ENCODE measurements at regions of chr6 and their contacts with region 1.

Region 1: GRCh38 chr6:99425647-99426453 is 742 bp upstream of the PNISR start:
- DNase-seq: peak; percentile 82
- ATAC-seq: peak; percentile 60
- H3K4me3 Mint-ChIP-seq: peak overlapping the region; percentile 91
- H3K27ac Mint-ChIP-seq: peak overlapping the region; percentile 99
- H3K4me1 Mint-ChIP-seq: peaks cover 57% of the 10 kb centered on the region
- H3K27me3 Mint-ChIP-seq: no peaks in the 10 kb centered on the region

Region 2: DNA sequence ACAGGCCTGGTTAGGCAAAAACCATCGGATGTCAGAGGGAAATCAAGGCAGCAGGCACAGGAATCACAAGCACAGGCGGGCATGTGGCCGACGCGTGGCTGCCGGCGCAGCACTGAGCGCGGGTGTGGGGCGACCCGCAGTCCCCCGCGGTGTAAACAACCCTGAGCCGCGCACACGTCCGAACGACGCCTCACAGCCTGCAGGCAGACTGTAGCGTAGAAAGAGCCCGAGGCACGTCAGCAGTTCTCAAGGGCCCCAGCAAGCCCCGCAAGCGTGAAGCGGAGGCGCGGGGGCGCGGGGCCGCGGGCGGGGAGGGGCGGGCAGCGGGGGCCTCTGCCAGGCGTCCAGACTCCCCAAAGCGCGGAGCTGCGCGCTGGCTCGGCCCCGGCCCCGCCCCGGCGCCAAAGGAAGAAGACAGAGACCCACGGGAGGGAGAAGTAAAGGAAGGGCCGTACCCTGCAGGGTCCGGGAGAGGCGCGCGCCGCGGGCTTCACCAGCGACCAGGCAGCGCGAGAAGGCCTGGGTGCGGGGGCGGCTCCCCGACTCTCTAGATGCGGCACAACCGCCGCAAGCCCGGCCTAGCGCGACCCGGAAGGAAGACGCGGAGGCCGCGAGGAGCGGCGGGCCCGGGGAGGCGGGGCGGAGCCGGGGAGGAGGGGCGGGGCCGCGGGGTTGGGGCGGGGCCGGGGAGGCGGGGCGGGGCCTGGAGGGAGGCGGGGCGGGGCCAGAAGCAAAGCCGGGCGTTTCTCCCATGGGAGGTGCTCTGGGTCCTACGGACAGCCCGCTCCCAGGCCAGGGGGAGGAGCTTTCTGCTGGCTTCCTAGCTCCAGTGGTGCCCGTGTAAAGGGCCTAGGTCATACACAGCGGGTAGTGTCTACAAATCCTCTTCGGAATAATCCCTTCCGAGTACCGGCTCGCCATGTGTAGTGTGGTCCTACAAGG is 478.2 kb before region 1 on chr6 and contains the start of gene FBXL4:
- CTCF ChIA-PET with region 1: no interaction called
- POLR2A ChIA-PET with region 1: no interaction called
- intact Hi-C with region 1: loop called in 1 of 2 experiments (anchors 2 kb)
- DNase-seq: peak; percentile 92
- ATAC-seq: peak; percentile 87
- H3K4me3 Mint-ChIP-seq: peak within 1 kb of the TSS; percentile 93
- H3K27ac Mint-ChIP-seq: peak within 1 kb of the TSS; percentile 97
- H3K4me1 Mint-ChIP-seq: peaks cover 30% of the 10 kb centered on the region
- H3K27me3 Mint-ChIP-seq: no peaks in the 10 kb centered on the region
- total RNA-seq, gene FBXL4: 16.2 to 16.5 TPM

Region 3: DNA sequence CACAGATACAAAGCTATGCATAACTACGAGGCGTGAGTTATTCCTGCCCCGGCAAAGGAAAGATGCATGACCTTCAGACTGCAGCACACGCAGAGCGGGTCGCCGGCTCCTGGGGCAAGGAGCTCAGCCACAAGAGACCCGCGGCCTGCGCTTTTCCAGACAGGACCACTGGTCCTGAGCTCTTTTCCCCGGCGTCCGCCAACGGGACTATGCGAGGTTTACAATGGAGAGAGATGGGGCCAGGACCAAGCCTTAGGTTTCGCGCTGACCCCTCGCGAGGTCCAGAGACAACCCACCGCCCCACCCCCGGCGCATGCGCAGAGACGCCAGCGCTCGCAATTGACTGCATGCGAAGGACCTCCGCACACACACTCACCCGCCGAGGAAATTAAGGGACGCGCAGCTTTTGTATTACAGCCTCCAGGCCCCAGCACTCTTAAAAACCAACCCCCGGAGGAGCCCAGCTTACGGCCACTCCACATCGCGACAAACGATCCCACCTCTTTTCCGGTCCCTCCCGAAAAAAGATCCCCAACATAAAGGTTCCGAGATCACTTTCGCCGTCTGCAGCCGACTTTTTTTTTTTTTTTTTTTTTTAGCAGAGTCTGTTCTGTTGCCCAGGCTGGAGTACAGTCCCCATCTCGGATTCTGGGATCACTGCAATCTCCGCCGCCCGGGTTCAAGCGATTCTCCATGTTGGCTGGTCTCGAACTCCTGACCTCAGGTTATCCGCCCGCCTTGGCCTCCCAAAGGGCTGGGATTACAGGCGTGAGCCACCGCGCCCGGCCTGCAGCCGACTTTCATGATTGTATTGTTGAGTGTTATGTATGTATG is 31.9 kb before region 1 on chr6 and contains the start of gene COQ3:
- CTCF ChIA-PET with region 1: interaction called, 8 read pairs
- POLR2A ChIA-PET with region 1: interaction called, 4 read pairs
- intact Hi-C with region 1: loop called (anchors 1 kb)
- DNase-seq: peak; percentile 80
- ATAC-seq: peak; percentile 87
- H3K4me3 Mint-ChIP-seq: peak within 1 kb of the TSS; percentile 94
- H3K27ac Mint-ChIP-seq: peak within 1 kb of the TSS; percentile 84
- H3K4me1 Mint-ChIP-seq: peaks cover 14% of the 10 kb centered on the region
- H3K27me3 Mint-ChIP-seq: no peaks in the 10 kb centered on the region
- total RNA-seq, gene COQ3: 13.5 to 23.4 TPM

Region 4: DNA sequence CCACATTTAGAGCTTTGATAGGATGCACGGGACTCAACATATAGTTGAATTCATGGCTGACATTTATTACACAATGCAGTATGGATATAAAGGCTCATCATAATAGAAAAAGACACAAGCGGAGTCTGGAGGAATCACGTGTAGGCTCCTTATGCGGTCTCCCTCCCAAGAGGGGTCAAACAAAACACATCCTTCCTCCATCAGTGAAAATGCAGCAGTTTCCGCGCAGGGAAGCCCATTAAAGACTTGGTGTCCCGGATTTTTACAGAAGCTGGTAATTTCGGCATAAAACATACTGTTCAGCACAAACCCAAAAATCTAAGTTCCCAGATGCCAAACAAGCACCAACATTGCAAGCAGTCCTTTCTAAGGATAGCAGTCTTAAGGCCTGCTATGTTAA is 88.2 kb after region 1 on chr6:
- CTCF ChIA-PET with region 1: interaction called, 3 read pairs
- POLR2A ChIA-PET with region 1: no interaction called
- intact Hi-C with region 1: loop called (anchors 1 kb)
- DNase-seq: no peak
- ATAC-seq: no peak
- H3K4me3 Mint-ChIP-seq: peak overlapping the region; percentile 88
- H3K27ac Mint-ChIP-seq: no peak overlapping the region
- H3K4me1 Mint-ChIP-seq: peaks cover 29% of the 10 kb centered on the region
- H3K27me3 Mint-ChIP-seq: no peaks in the 10 kb centered on the region

Region 5: DNA sequence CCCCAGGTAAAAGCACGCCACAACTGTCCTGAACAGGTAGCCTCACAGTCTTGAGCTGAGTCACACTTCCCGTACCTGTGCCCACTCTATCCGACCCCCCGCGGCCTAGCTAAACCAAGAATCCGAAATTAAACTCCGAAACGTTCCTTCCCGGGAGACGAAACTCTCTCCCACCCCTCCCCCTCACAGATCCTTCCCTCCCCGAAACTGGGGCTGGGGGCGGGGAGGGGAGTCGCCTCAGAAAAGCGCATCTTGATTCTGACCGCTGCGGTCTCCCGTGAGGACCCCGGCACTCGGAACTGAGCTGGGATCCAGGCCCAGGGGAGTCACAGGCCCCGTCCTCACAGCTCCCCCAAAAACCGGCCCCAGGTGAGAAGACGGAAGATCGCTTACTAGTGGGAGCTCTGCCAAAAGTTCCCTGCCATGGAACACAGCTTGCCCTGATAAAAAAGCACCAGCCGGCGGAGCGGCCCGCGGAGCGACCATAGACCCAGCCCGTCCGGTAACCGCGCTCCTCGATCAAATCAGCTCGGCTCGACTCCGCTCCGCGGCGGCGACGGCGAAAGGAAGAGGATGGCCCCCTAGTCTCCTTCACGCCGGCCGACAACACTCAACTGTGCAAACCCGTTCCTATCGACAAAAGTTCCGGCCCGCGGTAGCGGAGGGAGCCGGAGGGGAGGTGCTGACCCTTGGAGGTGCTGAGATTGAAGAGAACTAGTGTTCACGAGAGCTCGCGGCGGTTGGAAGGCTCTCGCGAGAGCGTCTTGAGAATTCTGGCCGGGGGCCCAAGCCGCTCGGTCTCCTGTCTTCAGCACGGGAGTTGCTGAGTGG is 142.5 kb after region 1 on chr6 and contains the start of gene CCNC:
- CTCF ChIA-PET with region 1: interaction called, 4 read pairs
- POLR2A ChIA-PET with region 1: interaction called, 5 read pairs
- intact Hi-C with region 1: loop called (anchors 1 kb)
- DNase-seq: peak; percentile 94
- ATAC-seq: peak; percentile 98
- H3K4me3 Mint-ChIP-seq: peak within 1 kb of the TSS; percentile 97
- H3K27ac Mint-ChIP-seq: peak within 1 kb of the TSS; percentile 98
- H3K4me1 Mint-ChIP-seq: peaks cover 25% of the 10 kb centered on the region
- H3K27me3 Mint-ChIP-seq: no peaks in the 10 kb centered on the region
- total RNA-seq, gene CCNC: 50.7 to 67.3 TPM

Measured in activated CD4-positive, alpha-beta T cell treated with anti-CD3 and anti-CD28 coated beads for 36 hours (primary cell).